HepG2 (cell line): ENCODE measurements at regions of chr14 and their contacts with region 1.

Region 1: GRCh38 chr14:34707722-34708121 is 6.7 kb downstream of the CFL2 start:
- DNase-seq: no peak
- ATAC-seq: peak; percentile 43
- H3K4me3 ChIP-seq: no peak overlapping the region
- H3K27ac ChIP-seq: no peak overlapping the region
- H3K4me1 ChIP-seq: peaks cover 37% of the 10 kb centered on the region
- H3K27me3 ChIP-seq: no peaks in the 10 kb centered on the region
- CTCF ChIP-seq: no peak
- EP300 ChIP-seq: no peak
- POLR2A ChIP-seq: no peak
- RAD21 ChIP-seq: no peak

Region 2: GRCh38 chr14:34580381-34580780 is 127.3 kb before region 1 on chr14:
- CTCF ChIA-PET with region 1: no interaction called
- POLR2A ChIA-PET with region 1: no interaction called
- in situ Hi-C with region 1: no loop called
- intact Hi-C with region 1: no loop called
- DNase-seq: no peak
- ATAC-seq: no peak
- H3K4me3 ChIP-seq: no peak overlapping the region
- H3K27ac ChIP-seq: no peak overlapping the region
- H3K4me1 ChIP-seq: no peaks in the 10 kb centered on the region
- H3K27me3 ChIP-seq: no peaks in the 10 kb centered on the region
- CTCF ChIP-seq: no peak
- EP300 ChIP-seq: no peak
- POLR2A ChIP-seq: no peak
- RAD21 ChIP-seq: no peak

Region 3: DNA sequence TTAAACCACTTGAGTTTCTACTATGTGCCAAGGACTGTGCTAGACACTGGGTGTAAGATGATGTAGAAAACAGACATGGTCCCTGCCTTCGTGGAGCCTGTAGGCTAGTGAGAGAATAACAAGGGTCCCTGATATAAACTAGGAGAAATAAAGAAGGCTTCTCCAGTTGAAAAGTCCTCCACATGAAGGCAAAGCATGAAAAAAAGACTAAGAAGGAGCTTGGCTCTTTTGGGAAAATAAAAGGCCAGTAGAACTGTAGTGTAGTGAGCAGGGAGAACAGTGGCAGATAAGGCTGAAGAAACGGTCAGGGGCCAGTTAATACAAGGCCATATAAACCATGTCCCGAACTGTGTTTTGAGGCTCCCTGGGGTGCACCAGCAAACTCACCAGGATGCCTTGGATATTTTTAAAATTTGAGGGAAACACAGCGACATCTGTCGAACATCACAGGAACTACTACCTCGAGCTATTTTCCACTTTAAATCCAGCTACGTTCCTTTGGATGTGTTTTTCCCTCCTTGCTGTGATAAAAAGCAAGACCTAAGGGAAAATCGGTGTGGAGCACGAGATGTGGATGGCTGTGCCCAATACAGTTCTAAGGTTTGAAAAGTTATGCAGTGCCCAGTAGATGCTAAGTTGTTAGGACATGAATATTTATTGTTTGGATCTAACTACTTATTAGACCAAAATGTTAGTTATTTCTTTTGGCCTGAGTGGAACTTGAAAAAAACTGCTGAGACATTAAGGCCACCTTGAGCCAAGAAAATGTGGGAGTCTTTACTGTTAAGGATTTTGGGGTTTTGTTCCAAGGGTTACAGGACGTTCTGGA is 15.2 kb after region 1 on chr14:
- CTCF ChIA-PET with region 1: interaction called, 6 read pairs
- POLR2A ChIA-PET with region 1: interaction called, 13 read pairs
- in situ Hi-C with region 1: no loop called
- intact Hi-C with region 1: no loop called
- DNase-seq: peak; percentile 71
- ATAC-seq: peak; percentile 77
- H3K4me3 ChIP-seq: no peak overlapping the region
- H3K27ac ChIP-seq: no peak overlapping the region
- H3K4me1 ChIP-seq: peaks cover 10% of the 10 kb centered on the region
- H3K27me3 ChIP-seq: no peaks in the 10 kb centered on the region; a peak in 1 of 5 replicates
- CTCF ChIP-seq: peak; percentile 97
- EP300 ChIP-seq: no peak
- POLR2A ChIP-seq: no peak
- RAD21 ChIP-seq: peak; percentile 90

Region 4: DNA sequence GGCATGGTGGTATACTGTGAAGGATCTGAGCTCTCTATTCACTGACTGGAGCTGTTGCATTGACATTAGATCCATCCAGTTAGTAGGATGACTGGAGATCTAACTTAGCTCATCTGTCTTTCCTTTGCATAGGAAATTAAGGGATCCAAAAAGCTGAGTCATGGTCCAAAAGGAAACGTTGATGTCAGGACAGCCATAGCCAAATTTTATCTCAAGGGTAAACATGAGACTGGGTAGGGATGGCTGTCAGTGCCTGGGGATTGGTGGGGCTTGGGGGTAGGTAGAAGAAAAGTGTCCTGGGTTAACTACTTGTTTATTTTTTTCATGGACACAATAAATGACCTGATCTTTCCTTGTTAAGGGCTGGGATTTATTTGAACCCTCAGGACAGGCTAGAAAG is 342.9 kb after region 1 on chr14:
- CTCF ChIA-PET with region 1: no interaction called
- POLR2A ChIA-PET with region 1: no interaction called
- in situ Hi-C with region 1: no loop called
- intact Hi-C with region 1: no loop called
- DNase-seq: peak; percentile 87
- ATAC-seq: no peak
- H3K4me3 ChIP-seq: no peak overlapping the region
- H3K27ac ChIP-seq: peak overlapping the region; percentile 6
- H3K4me1 ChIP-seq: peaks cover 52% of the 10 kb centered on the region
- H3K27me3 ChIP-seq: no peaks in the 10 kb centered on the region; a peak in 1 of 5 replicates
- CTCF ChIP-seq: no peak
- EP300 ChIP-seq: peak in 1 of 2 experiments; percentile 65; a peak in 1 of 4 replicates
- POLR2A ChIP-seq: no peak
- RAD21 ChIP-seq: no peak